ENCODE measurements at regions of chr2 and their contacts with region 1.

Region 1: GRCh38 chr2:84925724-84926376 is 20.4 kb downstream of the TMSB10 start:
- DNase-seq: peak; percentile 96 to 97
- ATAC-seq: peak; percentile 79 to 91 (median 86)
- H3K4me3 ChIP-seq: peak overlapping the region in 9 of 10 donors; percentile 4 to 52 (median 44)
- H3K27ac ChIP-seq: peak overlapping the region in 9 of 10 donors; percentile 29 to 91 (median 83)
- H3K4me1 ChIP-seq: peaks cover 6 to 38% (median 23%) of the 10 kb centered on the region in 9 donors
- H3K27me3 ChIP-seq: no peaks in the 10 kb centered on the region
- CTCF ChIP-seq: peak; percentile 95 to 100 (median 99)

Region 2: DNA sequence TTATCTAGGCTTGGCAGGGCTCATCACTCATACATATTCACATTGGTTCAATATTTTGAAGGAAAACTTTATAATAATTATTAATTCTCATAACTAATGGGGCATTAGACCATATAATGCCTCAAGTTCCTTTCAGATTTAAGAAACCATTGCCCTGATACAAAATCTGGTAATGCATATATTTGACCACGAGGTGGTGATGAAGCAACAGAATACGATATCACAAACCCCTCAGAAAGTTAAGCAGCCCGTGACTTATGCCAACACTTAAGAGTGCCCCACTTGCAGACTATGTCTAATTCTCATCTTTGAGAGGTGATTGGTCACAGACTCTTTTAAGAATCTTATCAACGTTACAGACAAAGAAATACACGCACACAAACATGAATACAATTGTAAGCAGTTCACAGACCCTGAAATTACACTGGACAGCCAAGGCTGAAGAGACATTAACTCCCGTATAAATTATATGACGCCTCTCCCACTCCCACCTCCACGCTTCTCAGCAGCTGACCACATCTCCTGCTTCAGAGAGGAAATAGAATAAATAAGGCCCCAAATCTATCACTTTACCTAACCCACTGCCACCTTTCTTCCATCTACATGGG is 430.2 kb before region 1 on chr2:
- intact Hi-C with region 1: loop called in 6 of 10 experiments (anchors 2 to 5 kb)
- DNase-seq: peak in 1 of 2 donors; percentile 41
- ATAC-seq: peak in 7 of 8 donors; percentile 68 to 85 (median 77)
- H3K4me3 ChIP-seq: no peak overlapping the region
- H3K27ac ChIP-seq: no peak overlapping the region
- H3K4me1 ChIP-seq: peaks cover 0 to 4% (median 0%) of the 10 kb centered on the region in 9 donors
- H3K27me3 ChIP-seq: no peaks in the 10 kb centered on the region
- CTCF ChIP-seq: peak; percentile 44 to 83 (median 74)

Region 3: GRCh38 chr2:84897773-84898172 is 28.1 kb before region 1 on chr2:
- intact Hi-C with region 1: loop called in 1 of 10 experiments (anchors 2 kb)
- DNase-seq: no peak
- ATAC-seq: no peak
- H3K4me3 ChIP-seq: no peak overlapping the region
- H3K27ac ChIP-seq: peak overlapping the region in 6 of 10 donors; percentile 18 to 80 (median 38)
- H3K4me1 ChIP-seq: peaks cover 0 to 84% (median 25%) of the 10 kb centered on the region in 9 donors
- H3K27me3 ChIP-seq: no peaks in the 10 kb centered on the region
- CTCF ChIP-seq: no peak

Region 4: GRCh38 chr2:84970868-84971509 is 45.1 kb after region 1 on chr2 and contains the start of gene KCMF1:
- intact Hi-C with region 1: loop called in 1 of 10 experiments (anchors 2 kb)
- DNase-seq: peak; percentile 85 to 86
- ATAC-seq: peak; percentile 67 to 81 (median 76)
- H3K4me3 ChIP-seq: peak within 1 kb of the TSS; percentile 57 to 99 (median 88)
- H3K27ac ChIP-seq: peak within 1 kb of the TSS; percentile 87 to 99 (median 96)
- H3K4me1 ChIP-seq: peaks cover 6 to 70% (median 56%) of the 10 kb centered on the region in 9 donors
- H3K27me3 ChIP-seq: no peaks in the 10 kb centered on the region
- CTCF ChIP-seq: no peak
- total RNA-seq, gene KCMF1: 69.0 to 89.5 (median 81.0) TPM

Region 5: DNA sequence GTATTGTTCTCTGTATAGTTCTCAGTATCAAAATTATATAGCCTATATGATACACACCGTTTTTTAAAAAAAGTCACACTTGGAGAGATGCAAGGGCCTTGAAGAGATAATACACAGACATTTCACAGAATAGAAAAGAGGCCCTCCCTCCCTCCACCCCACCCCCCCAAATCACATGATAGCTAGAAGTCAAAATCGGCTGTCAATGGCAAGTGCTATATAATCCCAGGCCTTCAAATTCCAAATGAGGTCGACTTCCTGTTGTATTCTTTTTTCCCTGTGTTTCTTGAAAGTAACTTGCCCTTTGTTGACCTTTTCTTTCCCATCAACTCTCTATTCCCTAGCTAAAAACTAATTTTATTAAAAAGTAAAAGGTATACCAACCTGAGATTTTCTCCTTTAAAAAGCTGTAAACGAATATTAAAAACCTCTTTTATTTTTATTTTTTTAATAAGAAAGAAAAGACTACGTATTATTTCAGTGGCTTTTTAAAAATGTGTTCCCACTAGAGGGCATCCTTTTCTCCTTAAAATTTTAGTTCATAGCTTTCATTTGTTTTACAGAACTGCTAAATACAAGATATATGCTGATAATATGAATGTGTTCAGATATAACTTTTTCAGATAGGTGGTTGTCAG is 91.7 kb after region 1 on chr2:
- intact Hi-C with region 1: loop called in 3 of 10 experiments (anchors 1 to 5 kb)
- DNase-seq: no peak
- ATAC-seq: no peak
- H3K4me3 ChIP-seq: no peak overlapping the region
- H3K27ac ChIP-seq: no peak overlapping the region
- H3K4me1 ChIP-seq: peaks cover 0 to 67% (median 52%) of the 10 kb centered on the region in 9 donors
- H3K27me3 ChIP-seq: no peaks in the 10 kb centered on the region
- CTCF ChIP-seq: peak in 7 of 9 donors; percentile 28 to 62 (median 50)

Region 6: GRCh38 chr2:85308896-85309555 is 383.2 kb after region 1 on chr2:
- intact Hi-C with region 1: loop called in 1 of 10 experiments (anchors 10 kb)
- DNase-seq: peak; percentile 34 to 58
- ATAC-seq: peak; percentile 15 to 60 (median 49)
- H3K4me3 ChIP-seq: peak overlapping the region in 1 of 10 donors; percentile 27
- H3K27ac ChIP-seq: peak overlapping the region in 5 of 10 donors; percentile 4 to 42 (median 8)
- H3K4me1 ChIP-seq: peaks cover 4 to 38% (median 16%) of the 10 kb centered on the region in 9 donors
- H3K27me3 ChIP-seq: no peaks in the 10 kb centered on the region
- CTCF ChIP-seq: no peak

Region 7: DNA sequence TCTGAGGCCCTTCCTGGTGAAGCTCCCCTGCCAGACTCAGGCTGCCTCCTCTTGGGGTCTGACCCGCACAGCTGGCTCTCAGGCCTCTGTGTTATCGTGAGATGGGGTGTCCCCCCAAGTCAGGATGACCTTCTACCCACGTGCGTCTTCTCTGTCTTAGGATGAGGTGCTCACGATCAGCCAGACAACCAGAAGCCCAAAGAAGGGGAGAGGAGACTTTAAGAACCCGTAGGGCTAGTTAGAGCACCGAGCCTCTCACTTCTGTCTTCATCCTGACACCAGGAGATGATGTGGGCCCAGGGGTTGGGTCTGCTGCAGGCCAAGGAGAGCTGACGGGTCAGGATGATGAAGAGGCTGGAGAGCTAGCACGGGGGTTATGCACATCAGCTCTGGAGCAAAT is 463.3 kb after region 1 on chr2:
- intact Hi-C with region 1: no loop called
- DNase-seq: no peak
- ATAC-seq: no peak
- H3K4me3 ChIP-seq: no peak overlapping the region
- H3K27ac ChIP-seq: no peak overlapping the region
- H3K4me1 ChIP-seq: no peaks in the 10 kb centered on the region
- H3K27me3 ChIP-seq: no peaks in the 10 kb centered on the region
- CTCF ChIP-seq: no peak

Measured in heart right ventricle (tissue), 16 donors.